ENCODE measurements at regions of chr7 and their contacts with region 1.

Region 1: DNA sequence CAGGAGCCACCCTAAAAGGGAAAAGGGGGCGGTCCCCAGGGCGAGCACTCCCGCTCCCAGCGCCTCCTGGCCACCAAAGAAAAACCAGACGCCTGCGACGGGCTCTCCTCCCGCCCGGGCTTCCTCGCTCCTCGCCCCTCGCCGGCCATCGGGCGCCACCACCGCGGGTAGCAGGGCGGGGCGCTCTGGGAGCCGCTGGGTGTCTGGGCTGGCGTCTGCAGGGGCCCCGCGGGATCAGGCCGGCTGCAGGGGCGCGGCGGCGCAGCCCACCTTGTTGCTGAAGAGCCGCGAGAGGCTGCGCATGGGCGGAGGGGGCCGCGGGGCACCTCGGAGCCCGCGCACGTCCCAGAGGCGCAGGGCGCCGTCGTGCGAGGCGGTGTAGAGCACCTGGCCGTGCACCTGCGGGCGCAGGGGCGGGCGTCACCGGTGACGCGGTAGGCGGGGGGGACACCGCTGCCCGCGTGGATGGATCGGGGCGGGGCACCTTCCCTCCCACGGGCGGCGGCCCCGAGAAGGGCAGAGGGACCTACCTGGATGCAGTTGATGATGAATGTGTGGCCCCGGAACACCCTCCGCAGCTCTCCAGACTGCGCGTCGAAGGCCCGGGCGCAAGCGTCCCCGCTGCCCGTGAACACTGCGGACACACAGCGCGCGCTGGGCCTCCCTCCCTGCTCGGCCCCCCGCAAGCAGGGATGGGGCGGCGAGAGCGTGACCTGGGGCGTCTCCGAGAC is 28.3 kb downstream of the WDR86 start:
- DNase-seq: peak; percentile 91
- ATAC-seq: peak; percentile 71
- H3K4me3 ChIP-seq: peak overlapping the region; percentile 9 to 83 (median 53)
- H3K4me3 Mint-ChIP-seq: peak overlapping the region; percentile 87
- H3K27ac ChIP-seq: peak overlapping the region; percentile 80 to 82
- H3K27ac Mint-ChIP-seq: peak overlapping the region; percentile 92
- H3K4me1 ChIP-seq: peaks cover 18 to 23% of the 10 kb centered on the region in 2 donors
- H3K4me1 Mint-ChIP-seq: peaks cover 23% of the 10 kb centered on the region
- H3K27me3 ChIP-seq: peaks cover 0 to 12% (median 6%) of the 10 kb centered on the region in 4 experiments
- H3K27me3 Mint-ChIP-seq: peaks cover 10% of the 10 kb centered on the region
- CTCF ChIP-seq: no peak

Region 2: DNA sequence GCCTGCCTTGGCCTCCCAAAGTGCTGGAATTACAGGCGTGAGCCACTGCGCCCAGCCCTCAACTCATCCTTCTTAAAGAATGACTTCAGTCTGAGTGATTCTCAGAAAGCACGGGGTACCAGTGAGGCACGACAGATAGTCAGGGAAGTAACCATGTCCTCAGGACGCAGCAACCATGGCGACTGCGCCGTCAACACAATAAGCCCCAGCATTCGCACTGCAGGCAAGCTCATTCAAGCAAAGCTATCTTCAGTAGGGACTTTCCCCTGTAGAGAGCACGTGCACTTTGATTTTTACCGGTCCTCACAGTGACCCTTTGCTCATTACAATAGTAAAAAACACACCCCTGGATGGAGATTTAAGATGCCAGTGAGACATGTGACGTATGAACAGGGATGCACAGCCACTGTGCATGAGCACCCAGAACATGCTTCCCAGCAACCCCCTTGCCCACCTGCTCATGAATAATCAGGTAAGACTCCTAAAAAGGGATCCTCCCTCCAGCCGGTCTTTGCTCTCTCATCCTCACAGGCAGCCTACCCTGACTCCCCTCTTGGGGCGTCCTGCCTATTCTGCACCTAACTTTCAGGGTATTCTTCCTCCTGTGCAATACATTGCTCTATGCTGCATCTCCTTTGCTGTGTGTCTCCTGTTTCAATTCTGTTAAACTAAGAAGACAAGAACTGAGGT is 19.3 kb after region 1 on chr7:
- CTCF ChIA-PET with region 1: interaction called, 3 read pairs
- POLR2A ChIA-PET with region 1: interaction called, 3 read pairs
- intact Hi-C with region 1: loop called (anchors 1 kb)
- DNase-seq: peak; percentile 90
- ATAC-seq: peak; percentile 94
- H3K4me3 ChIP-seq: no peak overlapping the region
- H3K4me3 Mint-ChIP-seq: peak overlapping the region; percentile 64
- H3K27ac ChIP-seq: peak overlapping the region in 1 of 2 donors; percentile 35
- H3K27ac Mint-ChIP-seq: peak overlapping the region; percentile 91
- H3K4me1 ChIP-seq: peaks cover 13 to 16% of the 10 kb centered on the region in 2 donors
- H3K4me1 Mint-ChIP-seq: peaks cover 30% of the 10 kb centered on the region
- H3K27me3 ChIP-seq: peaks cover 0 to 5% (median 1%) of the 10 kb centered on the region in 4 experiments
- H3K27me3 Mint-ChIP-seq: no peaks in the 10 kb centered on the region
- CTCF ChIP-seq: no peak

Region 3: GRCh38 chr7:151432791-151433521 is 51.4 kb after region 1 on chr7:
- CTCF ChIA-PET with region 1: no interaction called
- POLR2A ChIA-PET with region 1: no interaction called
- intact Hi-C with region 1: no loop called
- DNase-seq: peak; percentile 29
- ATAC-seq: peak; percentile 63
- H3K4me3 ChIP-seq: no peak overlapping the region
- H3K4me3 Mint-ChIP-seq: no peak overlapping the region
- H3K27ac ChIP-seq: no peak overlapping the region
- H3K27ac Mint-ChIP-seq: no peak overlapping the region
- H3K4me1 ChIP-seq: peaks cover 19 to 21% of the 10 kb centered on the region in 2 donors
- H3K4me1 Mint-ChIP-seq: peaks cover 16% of the 10 kb centered on the region
- H3K27me3 ChIP-seq: peaks cover 0 to 4% (median 0%) of the 10 kb centered on the region in 4 experiments
- H3K27me3 Mint-ChIP-seq: peaks cover 8% of the 10 kb centered on the region
- CTCF ChIP-seq: peak; percentile 25